Right cardiac atrium (tissue), 5 donors: ENCODE measurements at regions of chr2 and their contacts with region 1.

Region 1: GRCh38 chr2:43105586-43106558 is 120.5 kb downstream of the ZFP36L2 start:
- DNase-seq: peak; percentile 78 to 89 (median 87)
- ATAC-seq: peak; percentile 59 to 64
- H3K4me3 ChIP-seq: no peak overlapping the region
- H3K27ac ChIP-seq: peak overlapping the region; percentile 87
- H3K4me1 ChIP-seq: peaks cover 25% of the 10 kb centered on the region
- H3K27me3 ChIP-seq: no peaks in the 10 kb centered on the region

Region 2: DNA sequence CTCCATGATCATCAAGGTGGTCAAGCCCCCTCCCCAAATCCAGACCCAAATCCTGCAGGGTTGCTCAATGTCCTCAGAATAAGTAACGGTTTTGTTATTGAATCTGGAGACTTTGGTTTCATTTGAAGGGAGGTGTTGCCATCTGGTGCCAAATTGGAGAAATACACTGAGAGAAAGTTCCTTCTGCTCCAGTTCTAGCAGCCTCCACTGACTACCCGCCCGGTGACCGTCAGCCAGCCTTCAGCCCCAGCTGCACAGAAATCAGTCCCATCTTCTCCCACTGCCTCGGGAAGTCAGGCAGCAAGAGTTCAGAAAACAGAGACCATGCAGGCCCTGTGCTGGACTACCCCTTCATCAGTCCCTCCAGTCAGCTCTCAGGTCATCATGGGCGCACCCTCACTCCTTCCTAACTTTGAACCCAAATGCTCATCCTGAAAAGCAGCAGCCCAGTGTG is 1019.3 kb before region 1 on chr2:
- intact Hi-C with region 1: no loop called
- DNase-seq: peak; percentile 32 to 65 (median 57)
- ATAC-seq: peak; percentile 27 to 64
- H3K4me3 ChIP-seq: no peak overlapping the region
- H3K27ac ChIP-seq: no peak overlapping the region
- H3K4me1 ChIP-seq: peaks cover 6% of the 10 kb centered on the region
- H3K27me3 ChIP-seq: no peaks in the 10 kb centered on the region

Region 3: GRCh38 chr2:42944779-42945415 is 161.0 kb before region 1 on chr2:
- intact Hi-C with region 1: no loop called
- DNase-seq: peak in 1 of 3 donors; percentile 45
- ATAC-seq: no peak
- H3K4me3 ChIP-seq: no peak overlapping the region
- H3K27ac ChIP-seq: no peak overlapping the region
- H3K4me1 ChIP-seq: no peaks in the 10 kb centered on the region
- H3K27me3 ChIP-seq: no peaks in the 10 kb centered on the region

Region 4: DNA sequence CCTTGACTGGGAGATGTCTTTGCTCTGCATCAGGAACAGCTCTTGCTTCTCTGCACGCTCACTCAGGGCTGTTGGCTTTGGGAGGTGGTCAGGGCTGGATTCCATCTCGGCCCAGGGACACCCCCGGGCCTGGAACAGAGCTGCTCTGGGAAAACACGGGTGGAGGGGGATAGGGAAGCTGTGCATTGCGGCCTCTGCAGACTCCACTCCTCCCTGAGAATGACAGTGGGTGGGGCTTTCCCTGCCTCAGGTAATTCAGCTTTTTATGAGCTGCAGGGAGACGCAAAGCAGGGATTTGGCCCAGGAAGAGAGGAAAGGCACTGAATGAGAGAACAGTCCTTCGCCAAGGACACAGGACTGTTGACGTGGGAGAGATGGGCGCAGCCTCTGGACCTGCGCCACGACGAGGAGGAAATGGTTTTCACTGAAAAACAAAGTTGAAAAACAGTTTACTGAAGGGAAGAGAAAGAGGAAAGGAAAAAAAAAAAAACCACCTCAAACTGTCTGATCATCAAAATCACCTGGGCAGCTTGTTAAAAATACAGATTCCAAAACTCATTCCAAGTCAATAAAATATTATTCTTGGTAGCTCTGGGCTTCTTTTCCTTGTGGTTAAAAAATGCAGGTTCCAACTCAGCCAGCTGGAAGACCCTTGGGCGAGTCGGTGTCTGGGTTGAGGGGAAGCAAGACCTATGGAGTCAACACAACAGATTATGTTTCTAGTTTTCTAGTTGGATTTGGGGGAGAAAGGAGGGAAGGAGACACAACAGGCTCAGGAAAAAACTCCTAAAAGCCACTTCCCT is 73.5 kb before region 1 on chr2:
- intact Hi-C with region 1: loop called in 1 of 4 experiments (anchors 10 kb)
- DNase-seq: peak; percentile 77 to 92 (median 89)
- ATAC-seq: peak; percentile 84 to 88
- H3K4me3 ChIP-seq: no peak overlapping the region
- H3K27ac ChIP-seq: peak overlapping the region; percentile 80
- H3K4me1 ChIP-seq: peaks cover 8% of the 10 kb centered on the region
- H3K27me3 ChIP-seq: no peaks in the 10 kb centered on the region